ENCODE measurements at regions of chr20 and their contacts with region 1.

Region 1: GRCh38 chr20:62616728-62617621 is 25.3 kb upstream of the SLCO4A1 start:
- DNase-seq: peak in 1 of 2 donors; percentile 66
- ATAC-seq: peak; percentile 61 to 71
- H3K4me3 ChIP-seq: no peak overlapping the region
- H3K27ac ChIP-seq: peak overlapping the region; percentile 53 to 84 (median 80)
- H3K4me1 ChIP-seq: peaks cover 9 to 19% of the 10 kb centered on the region in 2 donors
- H3K27me3 ChIP-seq: peaks cover 1 to 5% (median 3%) of the 10 kb centered on the region in 3 donors
- CTCF ChIP-seq: peak; percentile 91 to 98 (median 96)
- POLR2A ChIP-seq: no peak

Region 2: DNA sequence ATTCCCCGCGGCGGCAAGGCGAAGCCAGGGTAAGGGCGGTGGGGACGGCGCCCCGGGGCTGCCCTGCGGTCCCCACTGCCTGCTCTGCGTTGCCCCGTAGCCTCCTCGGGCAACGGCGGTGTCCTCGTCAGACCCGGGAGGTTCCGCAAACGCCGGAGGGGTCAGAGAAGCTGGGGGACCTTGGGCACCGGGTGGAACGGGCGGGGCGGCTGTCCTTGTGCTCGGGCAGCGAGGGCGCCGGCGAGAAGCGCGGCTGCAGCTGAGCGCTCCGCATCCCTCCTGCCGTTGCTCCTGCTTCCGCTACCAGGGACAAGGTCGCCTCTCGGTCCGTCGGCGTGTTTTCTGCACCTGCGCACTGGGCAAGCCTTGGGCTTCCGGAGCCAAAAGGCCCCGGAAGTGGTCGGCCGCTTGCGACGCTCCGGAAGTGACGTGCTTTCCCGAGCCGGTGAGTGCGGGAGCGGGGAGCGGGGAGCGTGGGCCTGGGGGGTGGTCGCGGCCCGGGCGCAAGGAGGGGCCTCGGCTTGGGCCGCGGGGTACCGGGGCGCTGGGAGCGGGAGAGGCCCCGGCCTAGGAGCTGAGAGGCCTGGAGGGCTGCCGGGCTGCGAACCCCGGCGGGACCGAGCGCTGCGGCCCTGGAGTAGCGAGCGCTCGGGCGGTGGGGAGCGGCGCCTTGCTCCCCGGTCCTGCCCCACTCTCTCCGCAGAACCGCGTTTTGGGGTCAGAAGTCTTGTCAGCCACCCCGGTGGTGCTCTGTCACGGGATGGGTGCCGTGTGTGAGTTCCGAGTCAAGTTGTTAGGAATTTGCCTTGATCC is 434.2 kb before region 1 on chr20 and contains the start of gene MTG2:
- in situ Hi-C with region 1: no loop called
- intact Hi-C with region 1: no loop called
- DNase-seq: peak; percentile 92 to 94
- ATAC-seq: peak; percentile 98
- H3K4me3 ChIP-seq: peak within 1 kb of the TSS; percentile 77 to 99 (median 84)
- H3K27ac ChIP-seq: peak within 1 kb of the TSS; percentile 87 to 97 (median 90)
- H3K4me1 ChIP-seq: peaks cover 16 to 20% of the 10 kb centered on the region in 2 donors
- H3K27me3 ChIP-seq: no peaks in the 10 kb centered on the region
- CTCF ChIP-seq: peak in 3 of 5 experiments; percentile 14 to 25 (median 15)
- POLR2A ChIP-seq: peak; percentile 89 to 93
- total RNA-seq, gene MTG2: 21.0 to 50.8 (median 29.3) TPM

Region 3: GRCh38 chr20:62407221-62407992 is 209.6 kb before region 1 on chr20 and contains the start of gene CABLES2:
- in situ Hi-C with region 1: no loop called
- intact Hi-C with region 1: loop called (anchors 1 kb)
- DNase-seq: peak; percentile 87 to 94
- ATAC-seq: peak; percentile 94 to 95
- H3K4me3 ChIP-seq: peak within 1 kb of the TSS; percentile 53 to 63 (median 62)
- H3K27ac ChIP-seq: peak within 1 kb of the TSS in 3 of 4 donors; percentile 3 to 62 (median 51)
- H3K4me1 ChIP-seq: peaks cover 20 to 25% of the 10 kb centered on the region in 2 donors
- H3K27me3 ChIP-seq: no peaks in the 10 kb centered on the region
- CTCF ChIP-seq: peak in 3 of 5 experiments; percentile 14 to 52 (median 44)
- POLR2A ChIP-seq: peak; percentile 15 to 52
- total RNA-seq, gene CABLES2: 3.6 to 9.3 (median 4.2) TPM

Region 4: GRCh38 chr20:62837800-62838454 is 221.0 kb after region 1 on chr20:
- in situ Hi-C with region 1: no loop called
- intact Hi-C with region 1: no loop called
- DNase-seq: no peak
- ATAC-seq: no peak
- H3K4me3 ChIP-seq: no peak overlapping the region
- H3K27ac ChIP-seq: no peak overlapping the region
- H3K4me1 ChIP-seq: no peaks in the 10 kb centered on the region
- H3K27me3 ChIP-seq: peaks cover 21 to 27% (median 27%) of the 10 kb centered on the region in 3 donors
- CTCF ChIP-seq: no peak
- POLR2A ChIP-seq: no peak